ENCODE measurements at regions of chr2 and their contacts with region 1.

Region 1: DNA sequence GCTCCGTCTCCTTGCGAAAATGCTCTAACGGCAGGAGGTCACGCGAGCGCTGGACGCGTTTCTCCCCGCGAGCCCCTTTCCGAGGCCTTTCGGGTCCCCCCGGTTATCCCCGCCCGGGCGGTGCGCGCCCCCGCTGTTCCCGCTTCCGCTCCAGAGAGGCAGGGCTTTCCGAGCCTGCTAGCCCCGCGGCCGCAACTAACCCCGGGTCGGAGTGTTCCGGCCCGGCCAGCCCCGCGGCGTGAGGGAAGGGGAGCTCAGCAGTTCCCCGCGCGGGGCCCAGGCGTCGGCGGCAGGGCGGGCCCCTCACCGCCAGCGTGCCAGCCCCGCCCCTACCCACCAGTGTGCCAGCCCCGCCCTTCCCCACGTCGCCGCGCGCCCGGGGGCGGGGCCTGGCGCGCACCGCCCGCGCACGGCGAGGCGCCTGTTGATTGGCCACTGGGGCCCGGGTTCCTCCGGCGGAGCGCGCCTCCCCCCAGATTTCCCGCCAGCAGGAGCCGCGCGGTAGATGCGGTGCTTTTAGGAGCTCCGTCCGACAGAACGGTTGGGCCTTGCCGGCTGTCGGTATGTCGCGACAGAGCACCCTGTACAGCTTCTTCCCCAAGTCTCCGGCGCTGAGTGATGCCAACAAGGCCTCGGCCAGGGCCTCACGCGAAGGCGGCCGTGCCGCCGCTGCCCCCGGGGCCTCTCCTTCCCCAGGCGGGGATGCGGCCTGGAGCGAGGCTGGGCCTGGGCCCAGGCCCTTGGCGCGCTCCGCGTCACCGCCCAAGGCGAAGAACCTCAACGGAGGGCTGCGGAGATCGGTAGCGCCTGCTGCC is at the start of gene MSH6:
- DNase-seq: peak; percentile 93
- ATAC-seq: peak; percentile 92
- H3K4me3 Mint-ChIP-seq: peak within 1 kb of the TSS; percentile 84
- H3K27ac Mint-ChIP-seq: peak within 1 kb of the TSS; percentile 82
- H3K4me1 Mint-ChIP-seq: peaks cover 31% of the 10 kb centered on the region
- H3K27me3 Mint-ChIP-seq: no peaks in the 10 kb centered on the region
- total RNA-seq, gene MSH6: 119 to 166 TPM

Region 2: GRCh38 chr2:47520825-47521665 is 261.8 kb before region 1 on chr2:
- CTCF ChIA-PET with region 1: no interaction called
- POLR2A ChIA-PET with region 1: no interaction called
- intact Hi-C with region 1: loop called in 1 of 2 experiments (anchors 1 kb)
- DNase-seq: peak; percentile 87
- ATAC-seq: peak; percentile 87
- H3K4me3 Mint-ChIP-seq: peak overlapping the region; percentile 83
- H3K27ac Mint-ChIP-seq: peak overlapping the region; percentile 92
- H3K4me1 Mint-ChIP-seq: peaks cover 16% of the 10 kb centered on the region
- H3K27me3 Mint-ChIP-seq: no peaks in the 10 kb centered on the region

Region 3: DNA sequence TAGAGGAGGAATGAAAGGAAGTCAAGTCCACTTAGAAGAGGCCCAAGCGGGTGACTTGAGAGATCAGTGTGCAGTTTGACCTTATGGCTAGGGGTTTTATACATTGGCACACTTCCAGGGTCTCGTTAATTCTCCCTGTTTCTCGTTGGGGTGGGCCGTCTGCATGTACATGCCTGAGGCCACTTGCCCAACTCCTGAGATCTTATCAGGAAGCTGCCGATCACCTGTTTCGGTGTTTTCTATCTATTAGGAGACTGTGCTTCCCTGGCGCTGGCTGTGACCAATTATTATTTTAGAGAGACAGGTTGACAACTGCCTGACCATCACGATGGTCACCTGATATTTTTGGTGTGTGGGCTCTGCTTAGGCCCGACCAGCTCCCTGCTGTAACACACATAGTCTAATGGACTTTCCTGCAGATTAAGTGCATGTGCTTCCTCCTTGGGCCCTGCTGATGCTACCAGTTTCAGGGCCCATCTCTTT is 31.0 kb before region 1 on chr2:
- CTCF ChIA-PET with region 1: no interaction called
- POLR2A ChIA-PET with region 1: interaction called, 10 read pairs
- intact Hi-C with region 1: loop called in 1 of 2 experiments (anchors 2 kb)
- DNase-seq: no peak
- ATAC-seq: no peak
- H3K4me3 Mint-ChIP-seq: no peak overlapping the region
- H3K27ac Mint-ChIP-seq: peak overlapping the region; percentile 80
- H3K4me1 Mint-ChIP-seq: peaks cover 12% of the 10 kb centered on the region
- H3K27me3 Mint-ChIP-seq: peaks cover 2% of the 10 kb centered on the region

Region 4: DNA sequence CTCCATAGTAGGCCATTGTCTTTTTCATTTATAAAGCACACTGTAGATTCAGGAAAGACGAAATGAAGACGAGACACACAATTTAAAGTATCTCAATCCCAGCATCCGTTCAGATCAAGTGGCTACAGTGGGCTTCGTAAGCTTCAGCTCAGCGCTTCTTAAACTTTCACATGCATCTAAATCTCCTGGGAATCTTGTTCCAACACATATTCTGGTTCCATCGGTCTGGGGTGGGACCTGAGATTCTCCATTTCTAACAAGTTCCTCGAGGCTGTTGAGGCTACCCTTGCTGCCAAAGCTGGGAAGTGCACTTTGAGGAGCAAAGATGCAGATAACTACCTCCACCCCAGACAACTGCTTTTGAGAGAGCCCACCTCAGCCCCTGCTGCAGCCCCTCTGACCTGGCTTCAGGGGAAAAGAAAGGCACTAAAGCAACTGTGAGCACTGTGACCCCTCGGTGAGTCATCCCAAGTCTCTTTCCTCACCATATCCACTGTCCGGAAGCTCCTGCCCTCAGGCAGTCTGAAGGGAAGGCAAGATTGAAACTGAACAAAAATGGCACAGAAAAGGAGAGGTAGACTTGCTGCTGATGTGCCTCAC is 324.5 kb after region 1 on chr2:
- CTCF ChIA-PET with region 1: no interaction called
- POLR2A ChIA-PET with region 1: no interaction called
- intact Hi-C with region 1: loop called in 1 of 2 experiments (anchors 2 kb)
- DNase-seq: no peak
- ATAC-seq: no peak
- H3K4me3 Mint-ChIP-seq: no peak overlapping the region
- H3K27ac Mint-ChIP-seq: no peak overlapping the region
- H3K4me1 Mint-ChIP-seq: peaks cover 17% of the 10 kb centered on the region
- H3K27me3 Mint-ChIP-seq: no peaks in the 10 kb centered on the region

Measured in activated CD4-positive, alpha-beta T cell treated with anti-CD3 and anti-CD28 coated beads for 36 hours (primary cell).